ENCODE measurements at regions of chr6 and their contacts with region 1.

Region 1: DNA sequence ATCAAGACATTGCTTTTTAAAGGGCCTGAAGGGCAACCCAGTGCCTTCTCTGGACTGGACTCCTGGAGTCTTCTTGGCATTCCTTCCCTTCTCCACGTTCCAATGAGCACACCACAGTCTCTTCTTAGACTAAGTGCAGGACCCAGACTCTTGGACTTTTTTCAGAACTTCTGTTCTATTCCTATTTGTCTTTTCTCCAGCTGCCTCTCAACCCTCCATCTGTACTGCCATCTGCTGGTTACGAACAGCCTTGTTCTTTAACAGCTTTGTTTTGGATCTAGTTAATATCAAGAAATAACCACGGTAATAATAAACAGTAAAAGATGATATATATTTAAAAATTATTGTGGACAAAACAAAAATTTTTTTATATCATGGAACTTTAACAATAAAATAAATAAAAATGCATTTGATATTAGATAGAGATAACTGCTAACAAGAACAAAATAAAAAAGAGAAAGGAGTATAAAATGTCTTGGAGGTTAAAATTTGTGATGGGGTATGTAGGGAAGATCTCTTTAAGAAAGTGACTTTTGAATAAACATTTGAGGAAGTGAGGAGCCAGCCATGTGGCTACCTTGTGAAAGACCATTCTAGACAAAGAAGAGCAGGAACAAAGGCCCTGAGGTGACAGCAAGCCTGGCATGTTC is 105.1 kb upstream of the HCRTR2 start:
- DNase-seq: peak; percentile 83
- ATAC-seq: peak; percentile 59
- H3K4me3 ChIP-seq: no peak overlapping the region
- H3K27ac ChIP-seq: no peak overlapping the region
- H3K4me1 ChIP-seq: no peaks in the 10 kb centered on the region
- H3K27me3 ChIP-seq: no peaks in the 10 kb centered on the region
- CTCF ChIP-seq: peak; percentile 88

Region 2: GRCh38 chr6:53986165-53986720 is 1083.0 kb before region 1 on chr6:
- CTCF ChIA-PET with region 1: no interaction called
- POLR2A ChIA-PET with region 1: no interaction called
- intact Hi-C with region 1: loop called (anchors 5 kb)
- DNase-seq: peak; percentile 79
- ATAC-seq: peak; percentile 29
- H3K4me3 ChIP-seq: no peak overlapping the region
- H3K27ac ChIP-seq: no peak overlapping the region
- H3K4me1 ChIP-seq: peaks cover 45% of the 10 kb centered on the region
- H3K27me3 ChIP-seq: no peaks in the 10 kb centered on the region
- CTCF ChIP-seq: peak; percentile 97

Region 3: GRCh38 chr6:54428431-54428830 is 640.8 kb before region 1 on chr6:
- CTCF ChIA-PET with region 1: no interaction called
- POLR2A ChIA-PET with region 1: no interaction called
- intact Hi-C with region 1: no loop called
- DNase-seq: no peak
- ATAC-seq: no peak
- H3K4me3 ChIP-seq: no peak overlapping the region
- H3K27ac ChIP-seq: no peak overlapping the region
- H3K4me1 ChIP-seq: no peaks in the 10 kb centered on the region
- H3K27me3 ChIP-seq: no peaks in the 10 kb centered on the region
- CTCF ChIP-seq: no peak

Region 4: DNA sequence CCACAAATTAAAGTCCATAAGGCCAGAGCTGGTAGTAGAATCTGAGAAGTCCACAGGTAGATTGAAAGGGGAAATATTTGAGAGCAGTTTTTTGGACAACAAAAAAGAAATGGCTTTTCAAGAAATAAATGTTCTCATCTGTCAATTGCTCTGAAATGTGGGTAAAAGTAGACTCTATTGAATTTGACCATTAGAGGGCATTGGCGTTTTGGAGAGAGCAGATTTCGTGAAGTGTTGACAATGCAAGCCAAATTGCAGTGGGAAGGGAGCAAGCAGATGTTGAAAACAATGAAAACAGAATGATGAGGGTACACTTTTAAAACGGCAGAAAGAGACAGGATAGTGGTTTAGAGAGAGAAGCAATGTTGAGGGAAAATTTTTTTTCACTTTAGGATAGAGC is 371.8 kb before region 1 on chr6:
- CTCF ChIA-PET with region 1: no interaction called
- POLR2A ChIA-PET with region 1: no interaction called
- intact Hi-C with region 1: loop called (anchors 1 kb)
- DNase-seq: peak; percentile 61
- ATAC-seq: peak; percentile 25; the same call in 1 of the 2 replicates
- H3K4me3 ChIP-seq: no peak overlapping the region
- H3K27ac ChIP-seq: no peak overlapping the region
- H3K4me1 ChIP-seq: peaks cover 42% of the 10 kb centered on the region
- H3K27me3 ChIP-seq: no peaks in the 10 kb centered on the region
- CTCF ChIP-seq: peak; percentile 72

Region 5: GRCh38 chr6:54878674-54879073 is 190.6 kb before region 1 on chr6:
- CTCF ChIA-PET with region 1: interaction called, 4 read pairs
- POLR2A ChIA-PET with region 1: no interaction called
- intact Hi-C with region 1: loop called (anchors 1 kb)
- DNase-seq: peak; percentile 69
- ATAC-seq: peak; percentile 48
- H3K4me3 ChIP-seq: no peak overlapping the region
- H3K27ac ChIP-seq: no peak overlapping the region
- H3K4me1 ChIP-seq: peaks cover 33% of the 10 kb centered on the region
- H3K27me3 ChIP-seq: no peaks in the 10 kb centered on the region
- CTCF ChIP-seq: peak; percentile 80

Region 6: GRCh38 chr6:55100686-55101085 is 31.4 kb after region 1 on chr6:
- CTCF ChIA-PET with region 1: no interaction called
- POLR2A ChIA-PET with region 1: no interaction called
- intact Hi-C with region 1: no loop called
- DNase-seq: no peak
- ATAC-seq: no peak
- H3K4me3 ChIP-seq: no peak overlapping the region
- H3K27ac ChIP-seq: no peak overlapping the region
- H3K4me1 ChIP-seq: no peaks in the 10 kb centered on the region
- H3K27me3 ChIP-seq: no peaks in the 10 kb centered on the region
- CTCF ChIP-seq: no peak

Region 7: GRCh38 chr6:55141611-55142010 is 72.4 kb after region 1 on chr6:
- CTCF ChIA-PET with region 1: no interaction called
- POLR2A ChIA-PET with region 1: no interaction called
- intact Hi-C with region 1: no loop called
- DNase-seq: peak; percentile 52
- ATAC-seq: peak; percentile 78
- H3K4me3 ChIP-seq: no peak overlapping the region
- H3K27ac ChIP-seq: no peak overlapping the region
- H3K4me1 ChIP-seq: peaks cover 9% of the 10 kb centered on the region
- H3K27me3 ChIP-seq: no peaks in the 10 kb centered on the region
- CTCF ChIP-seq: no peak

Region 8: GRCh38 chr6:55239099-55239498 is 169.8 kb after region 1 on chr6:
- CTCF ChIA-PET with region 1: no interaction called
- POLR2A ChIA-PET with region 1: no interaction called
- intact Hi-C with region 1: loop called (anchors 5 kb)
- DNase-seq: peak; percentile 16
- ATAC-seq: no peak
- H3K4me3 ChIP-seq: no peak overlapping the region
- H3K27ac ChIP-seq: no peak overlapping the region
- H3K4me1 ChIP-seq: no peaks in the 10 kb centered on the region
- H3K27me3 ChIP-seq: no peaks in the 10 kb centered on the region
- CTCF ChIP-seq: no peak